SK-N-SH (cell line): ENCODE measurements at regions of chr17 and their contacts with region 1.

Region 1: DNA sequence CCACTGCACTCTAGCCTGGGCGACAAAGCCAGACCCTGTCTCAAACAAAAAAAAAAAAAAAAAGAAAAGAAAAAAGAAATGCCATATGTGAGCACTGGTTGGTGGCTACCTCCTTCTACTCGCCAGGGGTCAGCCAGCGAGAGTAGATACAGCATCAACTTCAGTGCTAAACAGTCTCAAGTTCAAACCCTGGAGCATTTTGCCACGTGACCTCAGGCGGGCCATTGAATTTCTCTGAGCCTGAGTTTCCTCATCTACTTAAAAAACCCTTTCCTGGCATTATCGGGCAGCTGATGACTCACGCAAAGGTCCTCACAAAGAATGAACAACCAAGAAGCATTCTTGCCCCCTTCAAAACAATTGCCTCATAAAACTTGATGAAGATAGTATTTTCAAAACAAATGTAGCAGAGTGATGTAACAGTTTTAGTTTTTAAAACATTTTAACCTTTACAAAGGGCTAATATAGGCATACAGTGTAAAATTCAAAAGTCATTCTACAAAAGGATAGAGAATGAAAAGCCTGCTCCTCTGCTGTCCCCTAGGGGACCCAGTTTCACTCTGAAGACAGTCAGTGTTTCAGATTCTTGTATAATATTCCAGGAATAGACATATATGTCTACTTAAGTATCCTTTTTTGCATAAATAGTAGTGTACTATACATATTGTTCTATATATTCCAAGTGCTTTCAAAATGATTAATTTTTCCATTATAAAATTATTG is 28.4 kb downstream of the DNAH2 start:
- DNase-seq: no peak
- H3K4me3 ChIP-seq: no peak overlapping the region
- H3K27ac ChIP-seq: peak overlapping the region; percentile 13 to 61; a peak in 3 of 4 replicates
- H3K4me1 ChIP-seq: peaks cover 6 to 29% of the 10 kb centered on the region in 2 experiments; a peak in 2 of 4 replicates
- H3K27me3 ChIP-seq: no peaks in the 10 kb centered on the region
- CTCF ChIP-seq: peak; percentile 42; the same call in 1 of the 2 replicates
- EP300 ChIP-seq: no peak
- RAD21 ChIP-seq: no peak

Region 2: DNA sequence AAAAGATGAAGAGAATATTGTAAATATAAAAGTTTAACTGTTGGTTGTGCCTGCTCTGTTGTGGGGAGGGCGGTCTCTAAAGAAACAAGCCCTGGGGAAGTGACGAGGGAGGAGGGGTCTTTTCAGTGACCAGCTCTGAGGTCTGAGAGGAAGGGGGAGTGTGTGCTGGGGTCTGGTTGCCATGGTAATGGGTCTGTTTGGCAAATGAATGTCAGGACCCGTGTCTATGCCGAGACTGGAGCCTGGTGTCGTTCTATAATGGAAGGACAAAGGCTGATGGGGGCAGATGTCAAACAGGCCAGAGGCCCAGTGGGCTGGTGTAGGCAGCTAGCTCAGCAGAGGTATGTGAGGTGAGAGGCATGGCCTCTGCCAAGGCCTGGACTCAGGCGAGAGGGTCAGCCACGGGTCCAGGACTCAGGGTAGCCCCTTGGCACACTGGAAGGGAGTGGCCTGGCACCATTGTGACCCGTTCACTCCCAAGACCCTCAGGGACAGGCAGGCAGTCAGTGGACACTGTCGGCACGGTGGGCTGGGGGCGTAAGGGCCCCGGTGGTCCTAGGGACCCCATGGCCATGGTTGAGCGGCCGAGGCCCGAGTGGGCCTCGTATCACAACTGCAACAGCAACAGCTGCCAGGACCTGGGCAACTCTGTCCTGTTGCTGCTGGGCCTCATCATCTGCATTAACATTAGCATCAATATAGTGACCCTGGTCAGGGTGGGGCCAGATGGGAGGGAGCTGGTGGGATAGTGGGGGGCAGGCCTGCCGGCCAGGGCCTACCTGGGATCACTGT is 325.9 kb before region 1 on chr17 and contains the start of gene SPEM1:
- CTCF ChIA-PET with region 1: no interaction called
- POLR2A ChIA-PET with region 1: no interaction called
- DNase-seq: peak; percentile 71
- H3K4me3 ChIP-seq: no peak within 1 kb of the TSS
- H3K27ac ChIP-seq: no peak within 1 kb of the TSS
- H3K4me1 ChIP-seq: no peaks in the 10 kb centered on the region; a peak in 1 of 4 replicates
- H3K27me3 ChIP-seq: no peaks in the 10 kb centered on the region
- CTCF ChIP-seq: no peak
- EP300 ChIP-seq: no peak
- RAD21 ChIP-seq: no peak
- polyA plus RNA-seq, gene SPEM1: not detected in 2 replicates

Region 3: DNA sequence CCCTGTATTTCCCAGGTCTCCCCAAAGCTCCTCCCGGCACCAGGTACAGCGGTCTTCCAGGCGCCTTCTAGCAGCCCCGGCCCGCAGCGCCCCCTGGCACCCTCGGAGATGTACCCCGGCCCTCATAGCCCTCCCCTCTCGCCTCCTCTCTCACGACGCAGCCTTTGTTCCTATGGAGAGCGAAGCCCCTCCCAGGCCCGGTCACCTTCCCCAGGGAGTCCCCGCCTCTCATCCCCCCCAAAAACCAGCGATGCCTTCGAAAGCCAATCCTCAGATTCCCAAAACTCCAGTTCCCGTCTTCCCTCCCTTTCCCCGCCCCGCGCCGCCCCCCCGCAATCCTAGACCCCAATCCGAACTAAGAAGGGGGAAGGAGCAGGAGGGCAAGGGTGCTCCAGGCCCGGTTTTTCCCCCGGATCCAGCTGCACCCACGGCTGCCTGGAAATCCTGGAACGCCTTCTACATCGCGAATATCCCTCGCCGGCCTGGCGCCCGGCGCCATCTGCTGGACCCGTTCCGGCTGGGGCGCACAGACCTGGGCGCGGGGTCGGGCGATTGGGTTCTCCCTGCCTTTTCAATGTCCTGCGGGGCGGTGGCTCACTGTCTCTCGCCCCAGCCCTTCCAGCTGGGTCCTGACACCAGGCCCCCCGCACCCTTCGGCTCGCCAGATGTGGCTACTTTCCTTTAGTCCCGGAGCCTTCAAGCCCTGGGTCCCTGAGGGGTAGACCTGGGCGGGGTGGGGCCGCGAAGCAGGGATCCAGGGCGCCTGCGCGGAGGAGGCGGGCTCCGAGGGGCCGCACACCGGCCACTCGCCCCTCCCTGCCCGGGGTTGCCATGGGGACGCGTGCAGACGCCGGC is 28.8 kb before region 1 on chr17 and contains the start of gene DNAH2:
- CTCF ChIA-PET with region 1: interaction called, 19 read pairs
- POLR2A ChIA-PET with region 1: no interaction called
- DNase-seq: peak; percentile 97
- H3K4me3 ChIP-seq: peak within 1 kb of the TSS; percentile 72 to 92
- H3K27ac ChIP-seq: peak within 1 kb of the TSS; percentile 61 to 90; a peak in 3 of 4 replicates
- H3K4me1 ChIP-seq: peaks cover 3 to 22% of the 10 kb centered on the region in 2 experiments; a peak in 1 of 4 replicates
- H3K27me3 ChIP-seq: no peaks in the 10 kb centered on the region
- CTCF ChIP-seq: peak; percentile 58
- EP300 ChIP-seq: peak; percentile 7 to 42; a peak in 1 of 4 replicates
- RAD21 ChIP-seq: peak; percentile 45
- polyA plus RNA-seq, gene DNAH2: 0.13 and 0.18 TPM in 2 replicates

Region 4: GRCh38 chr17:7782237-7782636 is 36.3 kb after region 1 on chr17:
- CTCF ChIA-PET with region 1: interaction called, 39 read pairs
- POLR2A ChIA-PET with region 1: no interaction called
- DNase-seq: no peak
- H3K4me3 ChIP-seq: no peak overlapping the region
- H3K27ac ChIP-seq: no peak overlapping the region
- H3K4me1 ChIP-seq: no peaks in the 10 kb centered on the region
- H3K27me3 ChIP-seq: no peaks in the 10 kb centered on the region
- CTCF ChIP-seq: peak; percentile 54
- EP300 ChIP-seq: no peak
- RAD21 ChIP-seq: peak; percentile 49

Region 5: GRCh38 chr17:7825206-7825990 is 79.5 kb after region 1 on chr17:
- CTCF ChIA-PET with region 1: interaction called, 76 read pairs
- POLR2A ChIA-PET with region 1: interaction called, 4 read pairs
- DNase-seq: peak; percentile 69
- H3K4me3 ChIP-seq: no peak overlapping the region
- H3K27ac ChIP-seq: no peak overlapping the region
- H3K4me1 ChIP-seq: peaks cover 0 to 12% of the 10 kb centered on the region in 2 experiments; a peak in 1 of 4 replicates
- H3K27me3 ChIP-seq: peaks cover 2% of the 10 kb centered on the region
- CTCF ChIP-seq: peak; percentile 40
- EP300 ChIP-seq: no peak
- RAD21 ChIP-seq: peak; percentile 28; the same call in 1 of the 2 replicates

Region 6: DNA sequence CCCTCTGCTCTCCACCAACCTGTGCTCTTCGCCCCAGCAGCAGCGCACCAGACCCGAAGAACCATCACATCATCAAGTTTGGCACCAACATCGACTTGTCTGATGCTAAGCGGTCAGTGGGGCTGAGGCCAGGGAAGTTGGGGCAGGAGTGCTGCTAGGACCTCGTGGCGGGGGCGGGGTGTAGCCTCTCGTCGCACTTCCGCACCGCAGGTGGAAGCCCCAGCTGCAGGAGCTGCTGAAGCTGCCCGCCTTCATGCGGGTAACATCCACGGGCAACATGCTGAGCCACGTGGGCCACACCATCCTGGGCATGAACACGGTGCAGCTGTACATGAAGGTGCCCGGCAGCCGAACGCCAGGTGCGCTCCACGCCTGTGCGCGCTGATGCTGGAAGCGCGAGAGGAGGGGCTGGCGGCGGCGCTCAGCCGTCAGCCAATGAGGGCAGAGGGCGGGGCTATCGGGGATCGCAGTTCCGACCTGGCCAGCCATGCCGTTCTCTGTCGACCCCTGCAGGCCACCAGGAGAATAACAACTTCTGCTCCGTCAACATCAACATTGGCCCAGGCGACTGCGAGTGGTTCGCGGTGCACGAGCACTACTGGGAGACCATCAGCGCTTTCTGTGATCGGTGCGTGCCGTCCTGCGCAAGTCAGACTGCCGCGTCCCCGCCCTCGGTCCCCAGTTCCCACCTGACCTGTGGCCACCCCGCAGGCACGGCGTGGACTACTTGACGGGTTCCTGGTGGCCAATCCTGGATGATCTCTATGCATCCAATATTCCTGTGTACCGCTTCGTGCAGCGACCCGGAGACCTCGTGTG is 105.7 kb after region 1 on chr17:
- CTCF ChIA-PET with region 1: interaction called, 22 read pairs
- POLR2A ChIA-PET with region 1: interaction called, 9 read pairs
- DNase-seq: peak; percentile 94
- H3K4me3 ChIP-seq: peak overlapping the region in 1 of 2 experiments; percentile 3; a peak in 1 of 4 replicates
- H3K27ac ChIP-seq: peak overlapping the region in 1 of 2 experiments; percentile 34; a peak in 1 of 4 replicates
- H3K4me1 ChIP-seq: peaks cover 13 to 27% of the 10 kb centered on the region in 2 experiments; a peak in 2 of 4 replicates
- H3K27me3 ChIP-seq: no peaks in the 10 kb centered on the region
- CTCF ChIP-seq: peak; percentile 87
- EP300 ChIP-seq: no peak
- RAD21 ChIP-seq: peak; percentile 95

Region 7: GRCh38 chr17:7897773-7898172 is 151.9 kb after region 1 on chr17:
- CTCF ChIA-PET with region 1: interaction called, 10 read pairs
- POLR2A ChIA-PET with region 1: no interaction called
- DNase-seq: peak; percentile 72
- H3K4me3 ChIP-seq: no peak overlapping the region
- H3K27ac ChIP-seq: no peak overlapping the region; a peak in 1 of 4 replicates
- H3K4me1 ChIP-seq: no peaks in the 10 kb centered on the region
- H3K27me3 ChIP-seq: no peaks in the 10 kb centered on the region
- CTCF ChIP-seq: peak; percentile 70
- EP300 ChIP-seq: no peak
- RAD21 ChIP-seq: peak; percentile 92